H1 (cell line): ENCODE measurements at regions of chr5 and their contacts with region 1.

Region 1: DNA sequence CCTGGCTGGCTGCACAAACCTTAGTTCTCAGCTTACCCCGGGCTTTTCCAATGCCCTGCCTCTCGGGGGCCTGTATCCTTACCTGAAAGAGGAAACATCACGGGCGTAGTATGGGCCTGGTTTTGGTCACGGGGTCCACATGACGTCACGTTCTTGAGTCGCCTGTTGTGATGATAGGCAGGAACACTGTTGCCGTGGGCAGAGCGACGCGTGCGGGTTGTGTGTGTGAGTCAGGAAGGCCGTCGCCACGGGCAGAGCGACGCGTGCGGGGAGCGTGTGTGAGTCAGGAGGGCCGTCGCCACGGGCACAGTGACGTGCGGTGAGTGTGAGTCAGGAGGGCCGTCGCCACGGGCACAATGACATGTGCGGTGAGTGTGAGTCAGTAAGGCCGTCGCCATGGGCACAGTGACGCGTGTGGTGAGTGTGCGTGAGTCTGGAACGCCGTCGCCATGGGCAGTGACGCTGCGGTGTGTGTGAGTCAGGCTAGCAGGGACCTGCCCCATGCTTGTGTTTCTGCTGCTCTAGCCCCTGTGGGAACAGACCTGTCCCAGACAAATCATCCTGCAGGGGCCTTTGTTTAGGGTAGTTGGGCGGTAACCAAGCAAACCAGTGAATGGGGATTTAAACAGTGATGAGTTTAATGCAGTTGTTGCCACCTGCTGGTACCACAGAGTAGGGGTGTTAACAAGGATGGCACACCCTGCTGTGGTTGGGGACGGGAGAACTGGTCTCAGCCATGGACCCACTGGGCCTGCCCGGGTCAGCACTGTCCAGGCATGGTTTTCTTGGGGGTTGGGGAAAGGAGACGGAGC is 19.8 kb downstream of the TRIP13 start:
- DNase-seq: no peak
- H3K4me3 ChIP-seq: no peak overlapping the region
- H3K27ac ChIP-seq: peak overlapping the region; percentile 63
- H3K4me1 ChIP-seq: no peaks in the 10 kb centered on the region
- H3K27me3 ChIP-seq: no peaks in the 10 kb centered on the region
- CTCF ChIP-seq: no peak; a peak in 1 of 4 replicates
- EP300 ChIP-seq: no peak
- POLR2A ChIP-seq: no peak
- RAD21 ChIP-seq: no peak

Region 2: GRCh38 chr5:855771-856530 is 56.5 kb before region 1 on chr5:
- CTCF ChIA-PET with region 1: no interaction called
- POLR2A ChIA-PET with region 1: no interaction called
- DNase-seq: no peak
- H3K4me3 ChIP-seq: no peak overlapping the region
- H3K27ac ChIP-seq: no peak overlapping the region
- H3K4me1 ChIP-seq: 0 out of 7 replicates have a peak, but pooled peaks cover 0 to under 1% (median 0%) of the 10 kb centered on the region in 4 experiments
- H3K27me3 ChIP-seq: no peaks in the 10 kb centered on the region
- CTCF ChIP-seq: no peak
- EP300 ChIP-seq: no peak
- POLR2A ChIP-seq: no peak
- RAD21 ChIP-seq: no peak

Region 3: GRCh38 chr5:1011226-1011631 is 98.7 kb after region 1 on chr5:
- CTCF ChIA-PET with region 1: interaction called, 12 read pairs
- POLR2A ChIA-PET with region 1: no interaction called
- DNase-seq: peak in 1 of 2 experiments; percentile 90
- H3K4me3 ChIP-seq: no peak overlapping the region
- H3K27ac ChIP-seq: no peak overlapping the region
- H3K4me1 ChIP-seq: peaks cover 3 to 15% (median 6%) of the 10 kb centered on the region in 4 experiments; a peak in 6 of 7 replicates
- H3K27me3 ChIP-seq: peaks cover 14 to 34% (median 30%) of the 10 kb centered on the region in 4 experiments
- CTCF ChIP-seq: peak in 2 of 3 experiments; percentile 81 to 96; a peak in 3 of 4 replicates
- EP300 ChIP-seq: no peak
- POLR2A ChIP-seq: no peak
- RAD21 ChIP-seq: peak; percentile 57 to 58

Region 4: DNA sequence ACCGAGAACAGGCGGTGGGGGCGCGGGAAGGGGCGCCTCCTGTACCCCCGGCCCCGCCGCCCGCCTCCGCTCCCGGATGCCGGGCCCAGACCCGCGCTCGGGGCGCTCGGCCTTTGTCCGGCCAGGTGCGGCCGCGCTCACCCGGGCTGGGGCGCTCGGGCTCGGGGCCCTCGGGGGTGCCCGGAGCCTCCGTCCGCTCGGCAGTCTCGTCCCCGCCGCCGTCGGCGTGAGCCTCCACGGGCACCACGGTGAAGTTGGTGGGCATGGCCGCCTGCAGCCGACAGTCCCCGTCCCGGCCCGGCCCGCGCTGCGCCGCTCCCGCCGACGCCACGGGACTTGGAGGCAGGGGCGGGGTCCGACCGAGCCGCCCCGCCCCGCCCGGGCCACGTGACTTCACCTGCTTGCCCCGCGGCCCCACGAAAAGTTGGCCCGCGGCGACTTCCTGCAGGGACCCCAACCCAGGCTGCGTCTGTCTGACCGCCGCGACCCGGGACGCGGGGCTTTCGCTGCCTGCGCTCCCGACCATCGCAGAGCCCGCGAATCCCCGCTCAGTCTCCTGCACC is 199.3 kb after region 1 on chr5 and contains the start of gene SLC12A7:
- CTCF ChIA-PET with region 1: no interaction called
- POLR2A ChIA-PET with region 1: no interaction called
- DNase-seq: peak in 1 of 2 experiments; percentile 86
- H3K4me3 ChIP-seq: peak within 1 kb of the TSS; percentile 64 to 97 (median 77)
- H3K27ac ChIP-seq: no peak within 1 kb of the TSS; the same call in 1 of the 2 replicates
- H3K4me1 ChIP-seq: peaks cover 7 to 37% (median 29%) of the 10 kb centered on the region in 4 experiments
- H3K27me3 ChIP-seq: no peaks in the 10 kb centered on the region; a peak in 1 of 7 replicates
- CTCF ChIP-seq: no peak
- EP300 ChIP-seq: no peak
- POLR2A ChIP-seq: peak in 1 of 2 experiments; percentile 74; a peak in 2 of 3 replicates
- RAD21 ChIP-seq: no peak
- total RNA-seq, gene SLC12A7: 38.6 and 39.7 TPM in 2 replicates